ENCODE measurements at regions of chr5 and their contacts with region 1.

Region 1: GRCh38 chr5:100634937-100635534 is 99.9 kb downstream of the FAM174A start:
- DNase-seq: peak; percentile 85
- ATAC-seq: peak; percentile 96
- H3K4me3 ChIP-seq: no peak overlapping the region
- H3K27ac ChIP-seq: peak overlapping the region; percentile 38
- H3K4me1 ChIP-seq: peaks cover 15% of the 10 kb centered on the region
- H3K27me3 ChIP-seq: no peaks in the 10 kb centered on the region
- CTCF ChIP-seq: no peak

Region 2: DNA sequence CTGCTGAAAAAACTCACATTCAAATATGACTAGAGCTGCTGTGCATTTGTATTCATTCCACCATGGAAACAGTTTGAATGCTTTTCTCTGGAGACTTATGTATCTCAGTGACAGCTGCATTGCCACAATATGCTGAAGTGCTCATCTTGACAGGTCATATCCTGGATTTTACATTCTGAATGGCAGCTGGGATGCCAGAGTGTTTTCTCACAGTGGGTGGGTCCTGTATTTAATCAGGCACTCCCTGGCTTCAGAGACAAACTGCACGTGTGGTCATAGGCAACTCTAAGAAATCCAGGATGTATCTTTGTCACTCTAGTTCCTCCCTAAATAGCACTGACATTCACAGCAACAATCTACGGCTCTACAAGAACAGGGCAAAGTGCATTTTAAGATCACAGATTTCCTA is 192.4 kb after region 1 on chr5:
- CTCF ChIA-PET with region 1: no interaction called
- POLR2A ChIA-PET with region 1: no interaction called
- intact Hi-C with region 1: loop called (anchors 2 kb)
- DNase-seq: peak; percentile 94
- ATAC-seq: peak; percentile 83
- H3K4me3 ChIP-seq: peak overlapping the region; percentile 6; the same call in 1 of the 2 replicates
- H3K27ac ChIP-seq: peak overlapping the region; percentile 61
- H3K4me1 ChIP-seq: peaks cover 35% of the 10 kb centered on the region
- H3K27me3 ChIP-seq: no peaks in the 10 kb centered on the region
- CTCF ChIP-seq: no peak